Vagina (tissue), 2 donors: ENCODE measurements at regions of chr20 and their contacts with region 1.

Region 1: DNA sequence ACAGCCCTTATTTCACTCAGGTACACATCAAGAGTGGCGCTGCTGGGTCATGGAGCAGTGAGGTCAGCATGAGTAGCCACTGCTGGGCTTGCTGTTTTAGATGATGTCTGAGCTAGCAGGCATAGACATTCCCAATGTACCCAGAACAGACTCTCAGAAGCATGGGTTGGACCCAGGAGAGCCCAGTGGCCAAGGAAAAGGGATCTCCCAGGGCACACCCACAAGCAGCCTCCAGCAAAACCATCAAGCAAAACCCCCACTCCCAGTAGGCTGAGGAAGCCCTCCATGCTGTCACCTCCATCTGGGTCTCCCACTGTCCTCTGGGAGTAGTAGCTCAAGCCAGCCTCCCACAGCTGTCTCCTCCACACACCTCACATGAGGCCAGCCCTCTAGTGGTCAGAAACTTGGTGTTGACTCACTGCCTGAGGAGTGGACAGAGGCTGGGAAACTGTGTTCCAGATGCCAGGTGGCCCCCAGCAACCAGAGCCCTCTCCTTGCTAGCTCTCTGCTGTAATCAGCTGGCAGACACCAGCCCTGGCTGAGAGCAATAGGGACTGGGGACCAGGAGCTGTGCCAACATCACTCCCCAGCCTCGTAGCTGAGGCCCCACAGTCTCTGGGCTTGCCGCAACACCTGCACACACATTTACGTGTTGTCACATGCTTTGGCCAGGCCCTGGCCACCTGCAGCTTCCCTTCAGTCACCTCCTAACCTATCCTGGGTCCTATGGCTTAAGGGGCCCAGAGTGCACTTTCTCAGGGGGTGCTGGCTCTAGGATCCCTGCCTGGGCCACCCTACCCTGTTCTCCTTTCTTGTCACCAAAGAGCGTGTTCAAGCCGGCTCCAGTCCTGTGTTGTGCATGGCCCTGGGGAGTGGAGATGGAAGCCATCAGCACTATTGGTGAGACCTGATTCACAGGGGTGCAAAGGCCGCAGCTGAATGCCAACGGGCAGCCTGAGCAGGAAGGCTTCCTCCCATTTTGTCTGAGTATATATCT is 1.9 kb upstream of the AP5S1 start:
- DNase-seq: peak in 1 of 2 donors; percentile 89
- H3K4me3 ChIP-seq: no peak overlapping the region
- H3K27ac ChIP-seq: peak overlapping the region; percentile 97
- H3K4me1 ChIP-seq: peaks cover 34% of the 10 kb centered on the region
- H3K27me3 ChIP-seq: no peaks in the 10 kb centered on the region
- CTCF ChIP-seq: peak; percentile 22 to 47 (median 42)
- POLR2A ChIP-seq: no peak

Region 2: DNA sequence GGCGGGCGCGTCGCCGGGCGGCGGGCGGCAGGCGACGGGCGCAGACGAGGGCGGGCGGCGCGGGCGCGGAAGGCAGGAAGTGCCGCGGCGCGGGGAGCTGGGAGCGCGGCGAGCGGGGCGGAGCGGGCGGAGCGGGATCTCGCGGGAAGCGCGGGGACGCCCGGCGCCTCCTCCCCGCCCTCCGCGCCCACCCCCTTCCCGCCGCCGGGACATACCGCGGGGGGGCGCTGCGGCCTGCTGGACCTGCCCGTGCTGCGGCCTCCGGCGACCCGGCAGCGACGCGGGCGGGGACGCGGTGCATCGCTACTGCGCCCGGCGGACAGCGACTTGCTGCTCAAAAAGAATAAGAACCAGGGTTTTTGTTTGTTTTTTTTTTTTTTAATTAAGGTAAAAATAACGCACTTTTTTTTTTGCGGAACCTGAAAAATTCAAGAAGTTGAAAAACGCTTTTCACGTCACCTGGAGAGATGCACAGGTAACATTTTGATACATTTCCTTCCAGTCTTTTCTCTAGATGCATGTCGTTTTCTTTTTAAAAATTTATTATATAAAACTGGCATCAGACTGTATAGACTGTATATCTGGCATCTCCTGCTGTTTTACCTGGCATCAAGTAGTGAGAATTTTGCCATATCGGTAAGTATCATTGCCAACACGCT is 31.7 kb before region 1 on chr20 and contains the start of gene CENPB:
- intact Hi-C with region 1: loop called (anchors 2 kb)
- DNase-seq: peak in 1 of 2 donors; percentile 88
- H3K4me3 ChIP-seq: peak within 1 kb of the TSS; percentile 62 to 68
- H3K27ac ChIP-seq: peak within 1 kb of the TSS; percentile 80
- H3K4me1 ChIP-seq: peaks cover 55% of the 10 kb centered on the region
- H3K27me3 ChIP-seq: no peaks in the 10 kb centered on the region
- CTCF ChIP-seq: peak; percentile 40 to 76 (median 60)
- POLR2A ChIP-seq: no peak
- total RNA-seq, gene CENPB: 62.9 TPM